ENCODE measurements at regions of chr9 and their contacts with region 1.

Region 1: DNA sequence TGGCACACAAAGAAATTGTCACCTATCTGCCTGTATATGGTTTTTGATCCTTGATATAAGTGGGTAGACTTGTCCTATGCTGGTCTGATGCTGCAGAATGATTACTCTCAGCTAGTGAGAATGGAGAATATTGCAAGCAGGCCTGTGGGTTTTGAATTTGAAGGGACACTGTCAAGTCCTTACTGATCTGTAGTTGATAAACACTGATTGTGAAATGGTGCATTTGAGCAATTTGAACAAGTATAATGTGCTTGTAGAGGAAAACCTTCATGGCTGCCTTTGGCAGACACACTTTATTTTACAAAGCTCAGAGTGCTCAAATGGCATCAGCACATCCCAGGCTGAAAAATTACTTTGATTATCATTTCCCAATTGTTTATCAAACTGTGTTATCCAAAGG is 9.3 kb downstream of the ENTREP1 start:
- DNase-seq: no peak
- ATAC-seq: no peak
- H3K4me3 Mint-ChIP-seq: no peak overlapping the region
- H3K27ac Mint-ChIP-seq: no peak overlapping the region
- H3K4me1 Mint-ChIP-seq: peaks cover 41% of the 10 kb centered on the region
- H3K27me3 Mint-ChIP-seq: no peaks in the 10 kb centered on the region
- CTCF ChIP-seq: no peak

Region 2: GRCh38 chr9:69295872-69296552 is 38.3 kb before region 1 on chr9:
- CTCF ChIA-PET with region 1: no interaction called
- POLR2A ChIA-PET with region 1: no interaction called
- DNase-seq: no peak
- ATAC-seq: no peak
- H3K4me3 Mint-ChIP-seq: no peak overlapping the region
- H3K27ac Mint-ChIP-seq: no peak overlapping the region
- H3K4me1 Mint-ChIP-seq: peaks cover 4% of the 10 kb centered on the region; the same call in 1 of the 2 replicates
- H3K27me3 Mint-ChIP-seq: no peaks in the 10 kb centered on the region
- CTCF ChIP-seq: no peak

Region 3: GRCh38 chr9:69344459-69344858 is 10.1 kb after region 1 on chr9:
- CTCF ChIA-PET with region 1: interaction called, 11 read pairs
- POLR2A ChIA-PET with region 1: no interaction called
- DNase-seq: peak; percentile 16
- ATAC-seq: no peak
- H3K4me3 Mint-ChIP-seq: no peak overlapping the region
- H3K27ac Mint-ChIP-seq: no peak overlapping the region
- H3K4me1 Mint-ChIP-seq: peaks cover 55% of the 10 kb centered on the region
- H3K27me3 Mint-ChIP-seq: no peaks in the 10 kb centered on the region
- CTCF ChIP-seq: no peak

Measured in WTC11 (cell line).